ENCODE measurements at regions of chr1 and their contacts with region 1.

Region 1: GRCh38 chr1:36160949-36161485 is 5.1 kb downstream of the MAP7D1 start:
- DNase-seq: peak in 1 of 2 experiments; percentile 64
- H3K4me3 ChIP-seq: no peak overlapping the region
- H3K27ac ChIP-seq: peak overlapping the region; percentile 55
- H3K4me1 ChIP-seq: peaks cover 51% of the 10 kb centered on the region
- H3K27me3 ChIP-seq: no peaks in the 10 kb centered on the region
- CTCF ChIP-seq: no peak

Region 2: GRCh38 chr1:36109041-36109679 is 51.9 kb before region 1 on chr1:
- CTCF ChIA-PET with region 1: no interaction called
- POLR2A ChIA-PET with region 1: no interaction called
- intact Hi-C with region 1: no loop called
- DNase-seq: peak; percentile 63 to 77
- H3K4me3 ChIP-seq: no peak overlapping the region
- H3K27ac ChIP-seq: no peak overlapping the region
- H3K4me1 ChIP-seq: peaks cover 17% of the 10 kb centered on the region
- H3K27me3 ChIP-seq: no peaks in the 10 kb centered on the region
- CTCF ChIP-seq: no peak

Region 3: DNA sequence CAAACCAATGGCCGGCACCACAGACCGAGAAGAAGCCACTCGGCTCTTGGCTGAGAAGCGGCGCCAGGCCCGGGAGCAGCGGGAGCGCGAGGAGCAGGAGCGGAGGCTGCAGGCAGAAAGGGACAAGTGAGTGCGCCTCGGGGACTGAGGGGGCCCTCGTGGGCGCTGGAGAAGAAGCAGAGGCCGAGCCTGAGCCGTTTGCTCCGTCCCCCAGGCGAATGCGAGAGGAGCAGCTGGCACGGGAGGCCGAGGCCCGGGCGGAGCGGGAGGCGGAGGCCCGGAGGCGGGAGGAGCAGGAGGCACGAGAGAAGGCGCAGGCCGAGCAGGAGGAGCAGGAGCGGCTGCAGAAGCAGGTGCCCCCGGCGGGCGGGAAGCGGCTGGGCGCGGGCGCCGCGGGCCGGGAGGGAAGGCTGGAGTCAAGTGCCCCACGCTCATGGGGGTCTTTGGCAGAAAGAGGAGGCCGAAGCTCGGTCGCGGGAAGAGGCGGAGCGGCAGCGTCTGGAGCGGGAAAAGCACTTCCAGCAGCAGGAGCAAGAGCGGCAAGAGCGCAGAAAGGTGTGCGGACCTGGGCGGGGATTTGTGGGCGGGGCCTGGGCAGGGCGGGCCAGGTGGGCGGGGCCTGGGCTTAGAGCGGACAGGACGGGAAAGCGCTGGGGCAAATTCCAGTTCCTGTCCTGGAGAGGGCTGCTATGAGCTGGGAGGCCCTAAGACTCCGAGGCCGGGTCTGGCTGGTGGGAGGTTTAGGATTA is 17.6 kb after region 1 on chr1:
- CTCF ChIA-PET with region 1: no interaction called
- POLR2A ChIA-PET with region 1: interaction called, 15 read pairs
- intact Hi-C with region 1: no loop called
- DNase-seq: no peak
- H3K4me3 ChIP-seq: no peak overlapping the region
- H3K27ac ChIP-seq: no peak overlapping the region
- H3K4me1 ChIP-seq: no peaks in the 10 kb centered on the region
- H3K27me3 ChIP-seq: no peaks in the 10 kb centered on the region
- CTCF ChIP-seq: no peak

Region 4: DNA sequence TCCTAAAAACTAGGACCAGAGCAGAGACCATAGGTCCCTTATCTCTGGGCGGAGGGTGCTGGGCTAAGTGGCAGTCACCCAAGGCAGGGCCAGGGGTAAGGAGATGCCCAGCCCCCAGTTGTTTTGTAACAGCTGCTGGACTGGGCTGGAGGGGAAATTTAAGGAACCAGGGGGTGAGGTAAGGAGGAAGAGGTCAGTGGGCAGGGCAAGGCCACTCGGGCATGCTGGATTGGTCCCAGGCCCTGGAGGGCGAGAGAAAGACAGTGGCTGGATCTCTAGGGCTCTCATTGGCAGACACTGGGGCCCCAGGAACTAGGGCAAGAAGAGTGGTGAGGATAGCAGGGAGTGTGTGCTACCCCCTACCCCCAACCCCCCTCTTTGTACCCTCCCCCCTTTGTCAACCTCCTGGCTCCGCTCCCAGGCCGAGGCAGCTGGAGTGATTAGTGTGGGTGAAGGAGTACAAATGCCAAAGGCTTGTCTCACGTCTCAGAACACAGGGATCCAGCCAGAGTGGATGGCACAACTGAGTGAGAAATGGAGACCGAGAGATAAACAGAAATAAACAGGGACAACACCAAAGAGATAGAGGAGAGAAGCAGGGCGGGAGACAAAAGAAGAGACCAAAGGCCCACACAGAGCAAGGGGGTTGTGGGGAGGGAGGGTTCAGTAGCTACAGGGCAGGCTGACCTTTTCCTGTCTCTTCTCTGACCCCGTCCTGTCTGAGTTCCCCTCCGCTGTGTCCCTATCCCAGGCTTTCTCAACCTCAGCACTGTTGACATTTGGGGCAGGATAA is 42.7 kb after region 1 on chr1:
- CTCF ChIA-PET with region 1: no interaction called
- POLR2A ChIA-PET with region 1: no interaction called
- intact Hi-C with region 1: no loop called
- DNase-seq: peak; percentile 37 to 63
- H3K4me3 ChIP-seq: no peak overlapping the region
- H3K27ac ChIP-seq: peak overlapping the region; percentile 61
- H3K4me1 ChIP-seq: peaks cover 35% of the 10 kb centered on the region
- H3K27me3 ChIP-seq: no peaks in the 10 kb centered on the region
- CTCF ChIP-seq: no peak

Region 5: GRCh38 chr1:36248250-36248894 is 87.4 kb after region 1 on chr1:
- CTCF ChIA-PET with region 1: interaction called, 16 read pairs
- POLR2A ChIA-PET with region 1: no interaction called
- intact Hi-C with region 1: no loop called
- DNase-seq: peak; percentile 79 to 88
- H3K4me3 ChIP-seq: no peak overlapping the region
- H3K27ac ChIP-seq: peak overlapping the region; percentile 90
- H3K4me1 ChIP-seq: peaks cover 66% of the 10 kb centered on the region
- H3K27me3 ChIP-seq: no peaks in the 10 kb centered on the region
- CTCF ChIP-seq: no peak

Region 6: GRCh38 chr1:36306902-36307456 is 146.0 kb after region 1 on chr1:
- CTCF ChIA-PET with region 1: interaction called, 10 read pairs
- POLR2A ChIA-PET with region 1: no interaction called
- intact Hi-C with region 1: no loop called
- DNase-seq: peak; percentile 79 to 95
- H3K4me3 ChIP-seq: peak overlapping the region; percentile 68
- H3K27ac ChIP-seq: peak overlapping the region; percentile 57
- H3K4me1 ChIP-seq: peaks cover 11% of the 10 kb centered on the region
- H3K27me3 ChIP-seq: no peaks in the 10 kb centered on the region
- CTCF ChIP-seq: no peak

Measured in PC-9 (cell line).